AG04449 (cell line): ENCODE measurements at regions of chr14 and their contacts with region 1.

Region 1: GRCh38 chr14:104694991-104695659 is 5.7 kb downstream of the INF2 start:
- DNase-seq: no peak
- H3K4me3 ChIP-seq: no peak overlapping the region
- CTCF ChIP-seq: no peak

Region 2: DNA sequence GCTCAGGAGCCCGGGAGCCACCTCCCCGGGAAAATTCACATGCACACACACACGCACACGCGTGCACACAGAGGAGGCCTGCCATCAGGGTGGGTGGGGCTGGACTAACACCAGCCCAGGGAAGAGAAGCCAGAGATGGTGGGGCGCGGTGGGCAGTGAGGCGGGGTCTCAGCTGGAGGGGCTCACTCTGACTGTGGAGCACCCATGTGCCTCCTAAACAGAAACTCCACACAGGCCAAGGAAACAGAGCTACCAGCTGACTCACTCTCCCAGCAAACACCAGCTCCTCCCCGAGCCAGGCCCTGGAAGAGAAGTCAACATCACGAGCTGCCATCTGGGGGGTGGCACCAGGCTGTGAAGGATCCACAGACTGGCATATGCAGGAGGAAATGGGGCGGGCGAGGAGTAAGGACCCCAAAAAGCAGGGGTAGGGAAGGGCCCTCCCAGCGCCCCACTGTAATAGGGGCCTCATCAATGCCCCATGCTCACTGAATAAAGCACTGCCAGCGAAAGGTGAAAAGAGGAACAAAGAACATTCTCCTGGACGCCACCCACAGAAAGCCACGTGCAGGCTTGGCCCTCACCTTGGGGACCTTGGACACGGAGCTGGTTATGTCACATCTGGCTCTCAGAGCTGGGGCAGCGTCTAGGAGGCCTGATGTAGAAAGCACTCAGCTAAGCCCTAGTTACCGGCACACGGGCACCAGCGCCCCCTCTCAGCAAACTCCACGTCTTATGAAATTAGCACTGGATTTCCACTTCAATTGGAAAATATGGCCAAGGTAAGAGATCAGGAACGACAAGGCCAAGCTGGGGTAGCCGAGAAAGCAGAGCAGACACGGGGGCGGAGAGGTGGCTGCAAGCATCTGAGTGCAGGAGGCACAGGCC is 14.1 kb before region 1 on chr14:
- CTCF ChIA-PET with region 1: interaction called, 13 read pairs
- POLR2A ChIA-PET with region 1: interaction called, 16 read pairs
- DNase-seq: no peak
- H3K4me3 ChIP-seq: peak overlapping the region; percentile 43
- CTCF ChIP-seq: peak; percentile 6

Region 3: DNA sequence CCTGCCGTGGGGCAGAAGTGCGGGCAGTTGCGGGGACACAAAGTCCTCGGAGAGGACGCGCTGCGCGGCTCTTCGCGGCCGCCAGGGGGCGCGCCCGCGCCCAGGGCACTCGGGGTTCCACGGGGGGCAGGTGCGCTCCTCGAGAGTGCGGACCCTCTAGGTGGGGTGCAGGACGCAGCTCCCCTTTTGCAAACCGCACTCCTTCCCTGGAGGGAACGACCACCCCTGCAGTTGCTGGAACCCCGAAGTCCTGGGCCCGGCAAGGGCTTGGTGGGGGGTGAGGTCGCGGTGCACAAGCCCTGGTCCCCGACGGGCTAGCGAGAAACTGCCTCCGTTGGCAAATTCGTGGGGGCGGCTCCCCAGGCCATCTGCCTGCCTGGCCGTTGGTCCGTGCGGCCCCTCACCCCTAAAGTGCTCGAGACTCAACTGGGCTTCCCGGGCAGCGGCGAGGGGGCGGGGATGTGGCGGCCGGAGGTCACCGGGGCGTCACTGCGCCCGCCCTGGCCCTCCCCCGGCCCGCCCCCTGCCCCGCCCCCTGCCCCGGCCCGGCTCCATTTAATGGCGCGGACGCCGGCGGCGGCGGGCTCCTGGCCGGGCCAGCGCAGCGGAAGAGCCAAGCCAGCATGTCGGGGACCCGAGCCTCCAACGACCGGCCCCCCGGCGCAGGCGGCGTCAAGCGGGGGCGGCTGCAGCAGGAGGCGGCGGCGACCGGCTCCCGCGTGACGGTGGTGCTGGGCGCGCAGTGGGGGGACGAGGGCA is 28.7 kb after region 1 on chr14 and contains the start of gene ADSS1:
- CTCF ChIA-PET with region 1: interaction called, 21 read pairs
- POLR2A ChIA-PET with region 1: no interaction called
- DNase-seq: no peak
- H3K4me3 ChIP-seq: peak within 1 kb of the TSS; percentile 58
- CTCF ChIP-seq: peak; percentile 82